ENCODE measurements at regions of chr7 and their contacts with region 1.

Region 1: GRCh38 chr7:112898432-112899290 is 108.5 kb upstream of the TMEM168 start:
- DNase-seq: peak; percentile 32
- ATAC-seq: peak; percentile 98
- H3K4me3 ChIP-seq: no peak overlapping the region
- H3K27ac ChIP-seq: no peak overlapping the region
- H3K4me1 ChIP-seq: no peaks in the 10 kb centered on the region
- H3K27me3 ChIP-seq: no peaks in the 10 kb centered on the region
- CTCF ChIP-seq: peak; percentile 76 to 82 (median 80)
- EP300 ChIP-seq: no peak
- POLR2A ChIP-seq: no peak
- RAD21 ChIP-seq: peak; percentile 98

Region 2: GRCh38 chr7:111752022-111752582 is 1146.6 kb before region 1 on chr7:
- CTCF ChIA-PET with region 1: interaction called, 4 read pairs
- POLR2A ChIA-PET with region 1: no interaction called
- RAD21 ChIA-PET with region 1: no interaction called
- SMC1A ChIA-PET with region 1: no interaction called
- in situ Hi-C with region 1: loop called (anchors 25 kb)
- intact Hi-C with region 1: no loop called
- DNase-seq: no peak
- ATAC-seq: peak; percentile 96
- H3K4me3 ChIP-seq: no peak overlapping the region
- H3K27ac ChIP-seq: no peak overlapping the region
- H3K4me1 ChIP-seq: no peaks in the 10 kb centered on the region
- H3K27me3 ChIP-seq: no peaks in the 10 kb centered on the region
- CTCF ChIP-seq: peak; percentile 61 to 88 (median 81)
- EP300 ChIP-seq: no peak
- POLR2A ChIP-seq: no peak
- RAD21 ChIP-seq: peak; percentile 69

Region 3: DNA sequence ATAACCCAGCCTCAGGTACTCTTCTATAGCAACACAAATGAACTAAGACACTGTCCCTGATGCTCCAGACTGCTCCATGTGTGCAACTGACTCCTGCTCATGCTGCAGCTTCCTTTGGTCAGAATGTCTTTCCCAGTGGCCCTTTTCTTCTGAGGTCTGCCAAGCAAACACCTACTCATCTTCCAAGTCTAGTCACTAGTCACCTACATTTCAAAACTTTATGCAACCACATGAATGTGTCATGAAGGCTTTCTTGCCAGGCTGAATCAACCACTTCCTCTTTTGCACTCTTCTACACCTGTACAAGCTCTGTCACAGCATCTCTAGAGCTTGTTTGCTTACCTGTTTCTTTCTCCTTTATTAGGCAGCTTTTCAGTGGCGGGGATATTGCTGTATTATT is 342.0 kb before region 1 on chr7:
- CTCF ChIA-PET with region 1: interaction called, 11 read pairs
- POLR2A ChIA-PET with region 1: interaction called, 7 read pairs
- RAD21 ChIA-PET with region 1: interaction called, 7 read pairs
- SMC1A ChIA-PET with region 1: interaction called, 10 read pairs
- in situ Hi-C with region 1: loop called (anchors 5 kb)
- intact Hi-C with region 1: no loop called
- DNase-seq: peak; percentile 20
- ATAC-seq: peak; percentile 91
- H3K4me3 ChIP-seq: no peak overlapping the region
- H3K27ac ChIP-seq: no peak overlapping the region
- H3K4me1 ChIP-seq: no peaks in the 10 kb centered on the region
- H3K27me3 ChIP-seq: no peaks in the 10 kb centered on the region
- CTCF ChIP-seq: no peak
- EP300 ChIP-seq: no peak; a peak in 1 of 4 replicates
- POLR2A ChIP-seq: no peak
- RAD21 ChIP-seq: no peak

Region 4: GRCh38 chr7:112749775-112750174 is 148.9 kb before region 1 on chr7:
- CTCF ChIA-PET with region 1: interaction called, 3 read pairs
- POLR2A ChIA-PET with region 1: no interaction called
- RAD21 ChIA-PET with region 1: no interaction called
- SMC1A ChIA-PET with region 1: no interaction called
- in situ Hi-C with region 1: no loop called
- intact Hi-C with region 1: loop called (anchors 5 kb)
- DNase-seq: no peak
- ATAC-seq: no peak
- H3K4me3 ChIP-seq: no peak overlapping the region
- H3K27ac ChIP-seq: no peak overlapping the region
- H3K4me1 ChIP-seq: no peaks in the 10 kb centered on the region
- H3K27me3 ChIP-seq: no peaks in the 10 kb centered on the region
- CTCF ChIP-seq: peak in 1 of 3 experiments; percentile 11; a peak in 1 of 6 replicates
- EP300 ChIP-seq: no peak
- POLR2A ChIP-seq: no peak
- RAD21 ChIP-seq: peak; percentile 27; the same call in 1 of the 2 replicates

Region 5: GRCh38 chr7:113421696-113422330 is 523.2 kb after region 1 on chr7:
- CTCF ChIA-PET with region 1: interaction called, 5 read pairs
- POLR2A ChIA-PET with region 1: no interaction called
- RAD21 ChIA-PET with region 1: no interaction called
- SMC1A ChIA-PET with region 1: no interaction called
- in situ Hi-C with region 1: no loop called
- intact Hi-C with region 1: loop called (anchors 5 kb)
- DNase-seq: peak; percentile 26
- ATAC-seq: peak; percentile 100
- H3K4me3 ChIP-seq: no peak overlapping the region
- H3K27ac ChIP-seq: no peak overlapping the region
- H3K4me1 ChIP-seq: no peaks in the 10 kb centered on the region
- H3K27me3 ChIP-seq: no peaks in the 10 kb centered on the region
- CTCF ChIP-seq: peak; percentile 85 to 96 (median 86)
- EP300 ChIP-seq: no peak
- POLR2A ChIP-seq: no peak
- RAD21 ChIP-seq: peak; percentile 84